Endothelial cell of umbilical vein (primary cell): ENCODE measurements at regions of chr10 and their contacts with region 1.

Region 1: GRCh38 chr10:28663576-28664313 is 13.6 kb upstream of the BAMBI start:
- DNase-seq: peak; percentile 80
- H3K4me3 ChIP-seq: no peak overlapping the region
- H3K27ac ChIP-seq: no peak overlapping the region
- H3K4me1 ChIP-seq: no peaks in the 10 kb centered on the region
- H3K27me3 ChIP-seq: peaks cover 8 to 12% of the 10 kb centered on the region in 2 experiments
- CTCF ChIP-seq: peak; percentile 95 to 96
- POLR2A ChIP-seq: no peak

Region 2: GRCh38 chr10:28628184-28628893 is 35.4 kb before region 1 on chr10:
- CTCF ChIA-PET with region 1: interaction called, 21 read pairs
- POLR2A ChIA-PET with region 1: no interaction called
- dilution Hi-C with region 1: no loop called
- intact Hi-C with region 1: loop called (anchors 1 kb)
- DNase-seq: peak; percentile 69
- H3K4me3 ChIP-seq: no peak overlapping the region
- H3K27ac ChIP-seq: no peak overlapping the region
- H3K4me1 ChIP-seq: no peaks in the 10 kb centered on the region
- H3K27me3 ChIP-seq: peaks cover 7 to 10% of the 10 kb centered on the region in 2 experiments
- CTCF ChIP-seq: peak; percentile 89 to 91
- POLR2A ChIP-seq: no peak

Region 3: DNA sequence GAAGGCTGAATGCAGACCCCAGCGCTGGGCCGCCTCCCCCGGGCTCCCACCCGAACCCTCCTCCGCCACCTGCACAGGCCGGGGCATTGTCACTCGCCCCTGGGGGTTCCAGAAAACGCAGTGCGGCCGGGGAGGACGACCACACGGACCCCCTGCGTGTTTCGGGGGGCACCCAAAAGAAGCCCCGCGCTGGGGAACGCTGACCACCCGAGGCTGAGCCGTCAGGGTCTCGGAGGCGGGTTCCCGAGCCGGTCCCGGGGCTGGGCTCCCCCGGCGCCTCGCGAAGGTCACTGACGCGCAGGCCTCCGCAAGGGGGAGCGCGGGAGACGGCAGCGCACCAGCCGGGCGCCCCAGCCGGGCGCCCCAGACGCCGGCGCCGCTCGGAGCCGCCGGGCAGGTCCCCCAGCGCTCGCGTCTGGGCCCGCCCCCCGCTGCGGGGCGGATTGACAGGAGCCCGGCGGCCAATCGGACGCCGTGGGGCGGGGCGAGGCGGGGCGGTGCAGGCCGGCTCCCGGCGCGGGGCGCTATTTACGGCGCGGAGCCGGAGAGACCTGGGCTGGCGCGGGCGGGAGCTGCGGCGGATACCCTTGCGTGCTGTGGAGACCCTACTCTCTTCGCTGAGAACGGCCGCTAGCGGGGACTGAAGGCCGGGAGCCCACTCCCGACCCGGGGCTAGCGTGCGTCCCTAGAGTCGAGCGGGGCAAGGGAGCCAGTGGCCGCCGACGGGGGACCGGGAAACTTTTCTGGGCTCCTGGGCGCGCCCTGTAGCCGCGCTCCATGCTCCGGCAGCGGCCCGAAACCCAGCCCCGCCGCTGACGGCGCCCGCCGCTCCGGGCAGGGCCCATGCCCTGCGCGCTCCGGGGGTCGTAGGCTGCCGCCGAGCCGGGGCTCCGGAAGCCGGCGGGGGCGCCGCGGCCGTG is 13.5 kb after region 1 on chr10 and contains the start of gene BAMBI:
- CTCF ChIA-PET with region 1: interaction called, 72 read pairs
- POLR2A ChIA-PET with region 1: interaction called, 3 read pairs
- dilution Hi-C with region 1: no loop called
- intact Hi-C with region 1: no loop called
- DNase-seq: peak; percentile 92
- H3K4me3 ChIP-seq: peak within 1 kb of the TSS; percentile 30 to 78 (median 64)
- H3K27ac ChIP-seq: peak within 1 kb of the TSS; percentile 28
- H3K4me1 ChIP-seq: peaks cover 32% of the 10 kb centered on the region
- H3K27me3 ChIP-seq: peaks cover 18 to 36% of the 10 kb centered on the region in 2 experiments
- CTCF ChIP-seq: peak; percentile 62 to 69
- POLR2A ChIP-seq: peak; percentile 96
- total RNA-seq, gene BAMBI: 3.2 and 4.3 TPM in 2 replicates

Region 4: GRCh38 chr10:29007748-29008610 is 344.2 kb after region 1 on chr10:
- CTCF ChIA-PET with region 1: interaction called, 11 read pairs
- POLR2A ChIA-PET with region 1: no interaction called
- dilution Hi-C with region 1: no loop called
- intact Hi-C with region 1: no loop called
- DNase-seq: no peak
- H3K4me3 ChIP-seq: no peak overlapping the region
- H3K27ac ChIP-seq: no peak overlapping the region
- H3K4me1 ChIP-seq: no peaks in the 10 kb centered on the region
- H3K27me3 ChIP-seq: peaks cover 0 to 4% of the 10 kb centered on the region in 2 experiments
- CTCF ChIP-seq: no peak
- POLR2A ChIP-seq: no peak

Region 5: DNA sequence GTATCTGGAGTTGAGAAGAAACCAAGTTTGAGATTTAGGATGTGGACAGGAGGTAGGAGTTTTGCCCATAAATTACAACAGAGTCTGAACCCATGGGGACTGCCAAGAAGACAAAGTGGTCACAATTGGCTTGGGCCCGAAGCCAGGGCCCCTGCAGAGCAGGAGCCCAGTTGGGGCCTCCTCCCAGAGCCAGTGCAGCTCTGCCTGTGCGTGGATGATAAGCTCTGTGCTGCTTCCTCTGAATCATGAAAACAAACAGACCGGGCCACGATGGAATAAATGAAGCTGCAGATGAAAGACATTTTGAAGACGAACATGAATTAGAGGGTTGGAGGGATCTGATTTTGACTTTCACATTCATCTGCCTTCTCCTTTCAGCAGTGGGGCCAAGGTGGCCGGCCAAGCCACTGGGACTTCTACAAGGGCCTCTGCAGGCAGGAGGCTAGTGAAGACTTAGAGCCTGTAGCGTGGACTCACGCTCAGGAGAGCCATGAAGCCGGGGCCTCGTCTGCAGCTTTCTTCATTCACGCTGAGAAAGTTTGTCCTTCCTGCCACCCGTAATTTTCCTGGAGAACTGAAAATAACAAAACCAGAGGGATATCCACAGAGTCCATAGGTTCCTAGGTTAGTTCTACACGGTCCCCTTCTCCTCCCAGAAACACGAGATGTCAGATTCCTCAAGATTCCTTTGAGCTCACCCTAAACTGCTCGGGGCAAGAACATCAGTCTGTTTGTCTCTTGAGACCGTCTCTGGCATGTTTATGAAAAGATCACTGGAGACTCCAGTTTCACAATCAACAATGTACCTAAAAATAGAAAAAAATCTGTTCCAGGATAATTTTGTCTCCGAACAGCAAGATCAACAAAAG is 468.4 kb after region 1 on chr10:
- CTCF ChIA-PET with region 1: interaction called, 53 read pairs
- POLR2A ChIA-PET with region 1: interaction called, 5 read pairs
- dilution Hi-C with region 1: no loop called
- intact Hi-C with region 1: loop called (anchors 2 kb)
- DNase-seq: peak; percentile 95
- H3K4me3 ChIP-seq: no peak overlapping the region
- H3K27ac ChIP-seq: peak overlapping the region; percentile 41
- H3K4me1 ChIP-seq: peaks cover 16% of the 10 kb centered on the region
- H3K27me3 ChIP-seq: peaks cover 6% of the 10 kb centered on the region in 2 experiments
- CTCF ChIP-seq: no peak
- POLR2A ChIP-seq: peak; percentile 54

Region 6: GRCh38 chr10:29304264-29305030 is 640.7 kb after region 1 on chr10:
- CTCF ChIA-PET with region 1: interaction called, 244 read pairs
- POLR2A ChIA-PET with region 1: no interaction called
- dilution Hi-C with region 1: no loop called
- intact Hi-C with region 1: loop called (anchors 1 kb)
- DNase-seq: peak; percentile 79
- H3K4me3 ChIP-seq: no peak overlapping the region
- H3K27ac ChIP-seq: no peak overlapping the region
- H3K4me1 ChIP-seq: no peaks in the 10 kb centered on the region
- H3K27me3 ChIP-seq: peaks cover 1 to 16% of the 10 kb centered on the region in 2 experiments
- CTCF ChIP-seq: peak; percentile 64 to 79
- POLR2A ChIP-seq: no peak